ENCODE measurements at regions of chr5 and their contacts with region 1.

Region 1: GRCh38 chr5:132820162-132820754 is 7.2 kb downstream of the SOWAHA start:
- DNase-seq: peak; percentile 84 to 97 (median 88)
- ATAC-seq: peak; percentile 96
- H3K4me3 ChIP-seq: no peak overlapping the region
- H3K27ac ChIP-seq: no peak overlapping the region
- H3K4me1 ChIP-seq: peaks cover 2 to 19% of the 10 kb centered on the region in 2 experiments; a peak in 3 of 5 replicates
- H3K27me3 ChIP-seq: no peaks in the 10 kb centered on the region
- CTCF ChIP-seq: peak; percentile 90 to 98 (median 96)
- EP300 ChIP-seq: peak; percentile 11; the same call in 1 of the 2 replicates
- POLR2A ChIP-seq: no peak
- RAD21 ChIP-seq: peak; percentile 98 to 99

Region 2: DNA sequence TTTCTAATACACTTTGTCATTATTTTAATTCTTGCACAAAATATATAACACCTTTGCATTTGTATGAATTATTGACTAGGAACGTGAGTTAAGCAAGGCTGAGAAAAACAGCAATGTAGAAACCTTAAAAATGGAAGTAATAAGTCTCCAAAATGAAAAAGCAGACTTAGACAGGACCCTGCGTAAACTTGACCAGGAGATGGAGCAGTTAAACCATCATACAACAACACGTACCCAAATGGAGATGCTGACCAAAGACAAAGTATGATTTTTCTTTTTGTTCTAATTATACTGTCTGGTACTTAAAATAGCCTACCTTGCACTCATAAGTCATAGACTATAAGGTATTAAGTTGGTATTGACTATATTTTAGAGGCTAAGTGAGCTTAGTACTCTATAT is 229.1 kb before region 1 on chr5:
- CTCF ChIA-PET with region 1: interaction called, 5 read pairs
- POLR2A ChIA-PET with region 1: interaction called, 3 read pairs
- in situ Hi-C with region 1: no loop called
- intact Hi-C with region 1: loop called (anchors 5 kb)
- DNase-seq: peak in 1 of 4 experiments; percentile 27
- ATAC-seq: 0 out of 3 replicates have a peak, but pooled peaks have one; percentile 47
- H3K4me3 ChIP-seq: no peak overlapping the region
- H3K27ac ChIP-seq: no peak overlapping the region
- H3K4me1 ChIP-seq: no peaks in the 10 kb centered on the region
- H3K27me3 ChIP-seq: no peaks in the 10 kb centered on the region
- CTCF ChIP-seq: peak; percentile 27 to 45 (median 41); a peak in 3 of 6 replicates
- EP300 ChIP-seq: no peak
- POLR2A ChIP-seq: no peak
- RAD21 ChIP-seq: peak; percentile 21 to 51; a peak in 3 of 4 replicates

Region 3: DNA sequence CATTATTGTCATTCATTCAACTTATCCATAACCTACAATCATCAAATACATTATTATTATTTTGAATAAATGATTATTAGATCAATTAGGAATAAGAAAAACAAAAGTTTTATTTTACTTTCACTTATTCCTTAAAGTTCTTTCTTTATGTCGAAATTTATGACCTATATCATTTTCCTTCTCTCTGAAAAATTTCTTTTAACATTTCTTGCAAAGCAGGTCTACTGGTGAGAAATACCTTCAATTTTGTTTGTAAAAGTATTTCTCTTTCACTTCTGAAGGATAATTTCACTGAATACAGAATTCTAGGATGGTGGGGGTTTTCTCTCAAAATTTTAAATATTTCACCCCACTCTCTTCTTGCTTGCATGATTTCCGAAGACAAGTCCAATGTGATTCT is 75.6 kb before region 1 on chr5:
- CTCF ChIA-PET with region 1: no interaction called
- POLR2A ChIA-PET with region 1: no interaction called
- in situ Hi-C with region 1: no loop called
- intact Hi-C with region 1: no loop called
- DNase-seq: no peak
- ATAC-seq: no peak
- H3K4me3 ChIP-seq: no peak overlapping the region
- H3K27ac ChIP-seq: no peak overlapping the region
- H3K4me1 ChIP-seq: peaks cover 0 to 4% of the 10 kb centered on the region in 2 experiments; a peak in 1 of 5 replicates
- H3K27me3 ChIP-seq: no peaks in the 10 kb centered on the region
- CTCF ChIP-seq: no peak
- EP300 ChIP-seq: no peak
- POLR2A ChIP-seq: no peak
- RAD21 ChIP-seq: no peak

Region 4: GRCh38 chr5:132807163-132807838 is 13.0 kb before region 1 on chr5:
- CTCF ChIA-PET with region 1: no interaction called
- POLR2A ChIA-PET with region 1: interaction called, 20 read pairs
- in situ Hi-C with region 1: no loop called
- intact Hi-C with region 1: no loop called
- DNase-seq: peak in 2 of 4 experiments; percentile 60 to 70
- ATAC-seq: peak; percentile 93
- H3K4me3 ChIP-seq: no peak overlapping the region
- H3K27ac ChIP-seq: no peak overlapping the region
- H3K4me1 ChIP-seq: peaks cover 7 to 10% of the 10 kb centered on the region in 2 experiments; a peak in 3 of 5 replicates
- H3K27me3 ChIP-seq: no peaks in the 10 kb centered on the region
- CTCF ChIP-seq: peak; percentile 41 to 61 (median 53); a peak in 5 of 6 replicates
- EP300 ChIP-seq: no peak
- POLR2A ChIP-seq: no peak
- RAD21 ChIP-seq: peak; percentile 35 to 48; a peak in 3 of 4 replicates

Measured in K562 (cell line).